ENCODE measurements at regions of chr13 and their contacts with region 1.

Region 1: DNA sequence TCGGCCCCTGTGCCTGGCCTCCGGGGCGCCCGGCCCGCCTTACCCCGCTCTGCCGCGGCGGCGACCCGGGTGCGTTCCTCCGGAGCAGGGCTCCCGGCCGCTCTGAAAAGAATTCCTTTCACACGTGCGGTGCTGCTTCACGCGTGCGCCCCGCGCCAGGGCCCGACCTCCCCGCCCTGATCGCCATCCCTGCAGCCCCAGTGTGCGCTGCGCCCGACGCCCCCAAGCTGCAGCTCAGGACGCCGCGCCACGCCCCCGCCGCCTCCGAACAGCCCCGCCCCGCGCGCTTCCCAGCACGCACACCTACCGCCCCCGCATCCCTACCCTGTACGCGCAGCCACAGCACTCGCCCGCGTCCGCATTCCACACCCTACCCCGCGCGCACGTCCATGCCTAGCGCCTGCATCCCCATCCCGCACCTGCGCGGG is at the start of gene GJA3:
- DNase-seq: peak; percentile 30
- H3K4me3 Mint-ChIP-seq: peak within 1 kb of the TSS; percentile 84
- H3K27ac Mint-ChIP-seq: peak within 1 kb of the TSS; percentile 67
- H3K4me1 Mint-ChIP-seq: peaks cover 17% of the 10 kb centered on the region
- H3K27me3 Mint-ChIP-seq: peaks cover 48% of the 10 kb centered on the region
- total RNA-seq, gene GJA3: not detected in 2 replicates

Region 2: GRCh38 chr13:19863323-19864023 is 297.4 kb before region 1 on chr13 and contains the start of gene ZMYM5:
- intact Hi-C with region 1: loop called (anchors 5 kb)
- DNase-seq: peak; percentile 95
- H3K4me3 Mint-ChIP-seq: peak within 1 kb of the TSS; percentile 99
- H3K27ac Mint-ChIP-seq: peak within 1 kb of the TSS; percentile 97
- H3K4me1 Mint-ChIP-seq: peaks cover 43% of the 10 kb centered on the region
- H3K27me3 Mint-ChIP-seq: peaks cover 3% of the 10 kb centered on the region
- total RNA-seq, gene ZMYM5: 12.2 and 14.2 TPM in 2 replicates

Region 3: GRCh38 chr13:19959831-19960652 is 200.8 kb before region 1 on chr13:
- intact Hi-C with region 1: loop called (anchors 1 kb)
- DNase-seq: peak; percentile 80
- H3K4me3 Mint-ChIP-seq: peak overlapping the region; percentile 95
- H3K27ac Mint-ChIP-seq: peak overlapping the region; percentile 93
- H3K4me1 Mint-ChIP-seq: peaks cover 25% of the 10 kb centered on the region
- H3K27me3 Mint-ChIP-seq: peaks cover 8% of the 10 kb centered on the region

Region 4: GRCh38 chr13:20049558-20050473 is 111.0 kb before region 1 on chr13:
- intact Hi-C with region 1: loop called (anchors 5 kb)
- DNase-seq: no peak
- H3K4me3 Mint-ChIP-seq: peak overlapping the region; percentile 30
- H3K27ac Mint-ChIP-seq: no peak overlapping the region
- H3K4me1 Mint-ChIP-seq: peaks cover 22% of the 10 kb centered on the region
- H3K27me3 Mint-ChIP-seq: no peaks in the 10 kb centered on the region

Region 5: DNA sequence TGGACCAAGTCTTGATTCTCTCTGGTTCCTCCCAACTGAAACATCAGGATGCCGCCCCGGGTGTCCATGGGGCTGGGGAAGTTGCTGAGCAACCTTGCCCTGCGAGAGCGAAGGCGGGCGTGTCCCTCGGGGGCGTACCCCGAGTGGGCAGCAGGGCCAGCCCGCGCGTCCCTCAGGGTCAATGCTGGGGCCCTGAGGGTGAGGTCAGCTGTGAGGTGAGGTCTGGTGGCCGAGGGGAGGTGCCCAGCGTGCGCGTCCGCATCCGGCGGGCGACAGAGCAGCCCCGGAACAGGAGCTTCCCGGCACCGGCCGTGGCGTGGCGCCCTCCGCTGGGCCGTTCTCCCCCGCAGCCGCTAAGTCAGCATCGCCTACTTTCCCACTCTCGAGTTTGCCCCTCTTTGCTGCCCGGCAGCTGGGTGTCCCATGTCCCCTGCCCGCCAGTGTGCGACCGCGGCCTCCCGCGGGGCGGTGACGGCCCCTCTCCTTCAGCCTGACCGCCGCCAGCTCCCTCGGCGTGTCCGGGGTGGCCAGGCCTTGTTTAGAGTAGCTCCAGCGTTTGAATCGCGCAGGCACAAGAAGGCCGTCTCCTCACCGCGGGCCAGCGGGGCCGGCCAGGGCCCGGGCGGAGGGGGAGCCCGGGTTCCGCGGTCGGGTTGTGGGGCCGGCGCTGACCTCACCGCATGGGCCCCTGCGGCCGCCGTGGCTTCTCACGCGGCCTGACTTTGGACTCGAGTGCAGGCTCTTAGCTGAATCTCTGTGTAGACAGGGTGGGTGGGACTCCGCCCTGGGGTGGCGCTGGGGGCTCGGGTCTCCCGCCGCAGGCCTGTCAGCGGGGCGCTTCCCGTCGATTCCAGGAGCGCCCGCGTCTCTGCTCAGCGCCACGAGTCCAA is 33.0 kb before region 1 on chr13:
- intact Hi-C with region 1: loop called (anchors 2 kb)
- DNase-seq: peak; percentile 25
- H3K4me3 Mint-ChIP-seq: peak overlapping the region; percentile 54
- H3K27ac Mint-ChIP-seq: no peak overlapping the region
- H3K4me1 Mint-ChIP-seq: no peaks in the 10 kb centered on the region
- H3K27me3 Mint-ChIP-seq: peaks cover 37% of the 10 kb centered on the region

Region 6: GRCh38 chr13:21670883-21671619 is 1510.2 kb after region 1 on chr13 and contains the start of gene FGF9:
- intact Hi-C with region 1: loop called (anchors 5 kb)
- DNase-seq: peak; percentile 77
- H3K4me3 Mint-ChIP-seq: peak within 1 kb of the TSS; percentile 82
- H3K27ac Mint-ChIP-seq: peak within 1 kb of the TSS; percentile 59
- H3K4me1 Mint-ChIP-seq: peaks cover 42% of the 10 kb centered on the region
- H3K27me3 Mint-ChIP-seq: peaks cover 62% of the 10 kb centered on the region
- total RNA-seq, gene FGF9: 0.23 and 0.47 TPM in 2 replicates

Measured in activated T-helper 1 cell treated with anti-CD3 and anti-CD28 coated beads, Interleukin-12 subunit alpha, Interleukin-12 subunit beta, Interleukin-2, Interleukin-4 antibody, amounts not matched to agents 30 ng/mL and 10 ng/mL and 1 ng/mL, durations not matched to agents 14 hours and 24 hours and 36 hours (primary cell).